A549 (cell line): ENCODE measurements at regions of chr12 and their contacts with region 1.

Region 1: DNA sequence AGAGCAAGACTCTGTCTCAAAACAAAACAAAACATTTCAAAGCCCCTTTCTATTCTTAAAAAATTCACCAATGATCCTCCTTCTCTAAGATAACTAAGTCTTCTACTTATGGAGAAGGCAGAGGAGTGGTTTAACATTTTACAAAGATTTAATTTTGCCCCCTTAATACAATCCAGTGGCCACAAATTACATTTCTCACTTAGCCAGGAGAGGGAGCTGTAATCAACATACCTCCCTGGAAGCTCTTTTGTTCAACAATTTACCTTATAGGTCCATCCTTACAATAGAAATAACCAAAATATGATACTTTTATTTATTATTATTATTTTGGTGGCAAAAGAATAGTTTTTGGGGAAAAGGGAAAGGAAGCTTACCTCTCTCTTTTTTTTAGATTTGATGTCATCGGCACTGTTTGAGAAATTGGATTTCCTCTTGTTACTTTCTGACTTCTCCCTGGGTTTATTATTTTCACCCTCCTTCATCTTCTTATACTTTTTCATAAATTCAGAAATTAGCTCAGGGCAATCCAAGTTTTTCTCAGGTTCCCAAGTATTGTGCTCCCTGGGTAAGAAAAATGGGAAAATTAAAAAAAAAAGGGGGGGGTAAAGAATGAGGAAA is 28.1 kb downstream of the CBX5 start:
- DNase-seq: peak; percentile 51 to 69
- ATAC-seq: peak; percentile 73 to 86
- H3K4me3 ChIP-seq: no peak overlapping the region
- H3K27ac ChIP-seq: no peak overlapping the region
- H3K4me1 ChIP-seq: no peaks in the 10 kb centered on the region
- CTCF ChIP-seq: peak; percentile 80
- EP300 ChIP-seq: no peak
- POLR2A ChIP-seq: no peak
- RAD21 ChIP-seq: peak; percentile 64 to 65

Region 2: DNA sequence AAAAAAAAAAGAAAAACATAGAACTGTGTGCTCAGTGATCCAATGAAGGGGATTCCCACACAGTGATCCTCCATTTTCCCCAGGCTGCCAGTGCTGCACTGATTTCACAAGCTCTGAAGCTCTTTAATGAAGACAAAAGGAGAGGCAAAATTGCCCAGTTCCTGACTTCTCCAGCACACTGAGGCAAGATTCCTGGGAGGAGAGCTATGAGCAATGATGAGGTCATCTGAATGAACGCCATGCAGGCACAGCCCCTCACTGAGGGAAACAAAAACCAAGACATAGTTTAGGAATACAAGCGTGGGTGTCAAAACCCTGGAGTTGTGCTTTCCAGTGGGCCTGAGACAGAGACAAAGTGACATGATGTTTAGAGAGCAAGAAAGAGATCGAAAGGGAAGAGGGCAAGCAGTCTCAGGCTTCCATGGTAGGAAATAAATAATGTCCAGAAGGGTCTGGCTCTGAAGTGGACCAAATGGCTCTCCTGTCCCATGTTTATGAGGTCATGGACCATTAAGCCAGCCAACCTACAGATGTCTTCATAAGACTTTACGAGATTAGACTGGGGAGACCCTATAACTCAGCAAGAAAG is 22.1 kb before region 1 on chr12:
- CTCF ChIA-PET with region 1: interaction called, 21 read pairs
- POLR2A ChIA-PET with region 1: no interaction called
- DNase-seq: peak; percentile 51 to 66
- ATAC-seq: peak; percentile 76 to 82
- H3K4me3 ChIP-seq: no peak overlapping the region
- H3K27ac ChIP-seq: peak overlapping the region; percentile 30 to 69; a peak in 4 of 6 replicates
- H3K4me1 ChIP-seq: peaks cover 22% of the 10 kb centered on the region
- CTCF ChIP-seq: no peak
- EP300 ChIP-seq: no peak
- POLR2A ChIP-seq: no peak
- RAD21 ChIP-seq: no peak

Region 3: GRCh38 chr12:54266852-54267251 is 15.1 kb after region 1 on chr12:
- CTCF ChIA-PET with region 1: interaction called, 50 read pairs
- POLR2A ChIA-PET with region 1: interaction called, 4 read pairs
- DNase-seq: no peak
- ATAC-seq: no peak
- H3K4me3 ChIP-seq: no peak overlapping the region
- H3K27ac ChIP-seq: no peak overlapping the region
- H3K4me1 ChIP-seq: peaks cover 16% of the 10 kb centered on the region
- CTCF ChIP-seq: no peak
- EP300 ChIP-seq: no peak
- POLR2A ChIP-seq: no peak
- RAD21 ChIP-seq: no peak

Region 4: GRCh38 chr12:54279866-54280467 is 28.2 kb after region 1 on chr12 and contains the start of gene CBX5:
- CTCF ChIA-PET with region 1: interaction called, 16 read pairs
- POLR2A ChIA-PET with region 1: interaction called, 23 read pairs
- DNase-seq: peak; percentile 98 to 100
- ATAC-seq: peak; percentile 55 to 65
- H3K4me3 ChIP-seq: peak within 1 kb of the TSS; percentile 88
- H3K27ac ChIP-seq: peak within 1 kb of the TSS; percentile 87 to 96
- H3K4me1 ChIP-seq: peaks cover 22% of the 10 kb centered on the region
- CTCF ChIP-seq: no peak
- EP300 ChIP-seq: no peak
- POLR2A ChIP-seq: peak; percentile 84
- RAD21 ChIP-seq: no peak
- polyA plus RNA-seq, gene CBX5: 115 and 129 TPM in 2 replicates

Region 5: GRCh38 chr12:54359033-54359761 is 107.4 kb after region 1 on chr12:
- CTCF ChIA-PET with region 1: interaction called, 26 read pairs
- POLR2A ChIA-PET with region 1: no interaction called
- DNase-seq: peak; percentile 99 to 100
- ATAC-seq: peak; percentile 80 to 92
- H3K4me3 ChIP-seq: peak overlapping the region; percentile 54
- H3K27ac ChIP-seq: peak overlapping the region; percentile 81 to 91
- H3K4me1 ChIP-seq: peaks cover 28% of the 10 kb centered on the region
- CTCF ChIP-seq: no peak
- EP300 ChIP-seq: no peak
- POLR2A ChIP-seq: peak; percentile 38; the same call in 1 of the 2 replicates
- RAD21 ChIP-seq: no peak